ENCODE measurements at regions of chr6 and their contacts with region 1.

Region 1: DNA sequence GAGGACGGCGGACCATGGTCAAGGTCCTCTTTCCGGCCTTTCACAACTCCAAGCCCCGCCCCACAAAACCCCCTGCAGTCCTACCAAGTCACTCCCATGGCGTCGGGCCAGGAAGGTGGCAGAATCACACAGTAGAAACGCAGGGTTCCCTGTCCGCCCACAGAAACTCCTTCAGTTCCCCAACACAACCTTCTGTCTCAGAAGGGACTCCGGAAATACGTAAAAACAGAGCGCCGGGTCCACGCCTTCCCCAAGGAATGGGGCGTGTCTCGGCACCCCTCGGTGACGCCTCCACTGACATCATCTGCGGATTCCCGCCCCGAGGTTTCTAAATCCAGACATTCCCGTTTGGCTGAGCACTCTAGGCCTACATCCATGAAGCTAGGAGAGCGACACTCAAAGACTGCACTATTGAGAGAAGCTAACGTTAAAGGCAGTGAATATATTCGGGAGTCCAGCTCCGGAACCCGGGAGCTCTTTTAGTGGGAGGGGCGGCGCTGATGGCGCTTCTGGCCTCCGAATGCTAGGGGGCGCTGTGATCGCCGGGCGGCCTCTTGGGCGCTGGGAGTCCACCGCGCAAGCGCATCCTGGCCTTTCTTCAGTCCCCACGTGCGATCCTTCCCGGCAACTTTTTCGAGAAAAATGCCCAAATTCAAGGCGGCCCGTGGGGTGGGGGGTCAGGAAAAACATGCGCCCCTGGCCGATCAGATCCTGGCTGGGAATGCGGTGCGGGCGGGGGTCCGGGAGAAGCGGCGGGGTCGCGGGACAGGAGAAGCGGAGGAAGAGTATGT is at the starts of genes BYSL and MED20:
- DNase-seq: peak; percentile 71
- H3K4me3 ChIP-seq: peak within 1 kb of the TSS; percentile 98
- CTCF ChIP-seq: peak; percentile 94

Region 2: GRCh38 chr6:41846666-41847237 is 74.4 kb before region 1 on chr6:
- CTCF ChIA-PET with region 1: interaction called, 22 read pairs
- POLR2A ChIA-PET with region 1: no interaction called
- DNase-seq: peak; percentile 69
- H3K4me3 ChIP-seq: no peak overlapping the region
- CTCF ChIP-seq: peak; percentile 71

Region 3: GRCh38 chr6:41894366-41895299 is 26.5 kb before region 1 on chr6:
- CTCF ChIA-PET with region 1: interaction called, 17 read pairs
- POLR2A ChIA-PET with region 1: no interaction called
- DNase-seq: no peak
- H3K4me3 ChIP-seq: peak overlapping the region; percentile 79
- CTCF ChIP-seq: no peak

Region 4: GRCh38 chr6:41941280-41942066 is 20.4 kb after region 1 on chr6 and contains the start of gene CCND3:
- CTCF ChIA-PET with region 1: interaction called, 341 read pairs
- POLR2A ChIA-PET with region 1: interaction called, 6 read pairs
- DNase-seq: no peak
- H3K4me3 ChIP-seq: peak within 1 kb of the TSS; percentile 96
- CTCF ChIP-seq: no peak

Region 5: DNA sequence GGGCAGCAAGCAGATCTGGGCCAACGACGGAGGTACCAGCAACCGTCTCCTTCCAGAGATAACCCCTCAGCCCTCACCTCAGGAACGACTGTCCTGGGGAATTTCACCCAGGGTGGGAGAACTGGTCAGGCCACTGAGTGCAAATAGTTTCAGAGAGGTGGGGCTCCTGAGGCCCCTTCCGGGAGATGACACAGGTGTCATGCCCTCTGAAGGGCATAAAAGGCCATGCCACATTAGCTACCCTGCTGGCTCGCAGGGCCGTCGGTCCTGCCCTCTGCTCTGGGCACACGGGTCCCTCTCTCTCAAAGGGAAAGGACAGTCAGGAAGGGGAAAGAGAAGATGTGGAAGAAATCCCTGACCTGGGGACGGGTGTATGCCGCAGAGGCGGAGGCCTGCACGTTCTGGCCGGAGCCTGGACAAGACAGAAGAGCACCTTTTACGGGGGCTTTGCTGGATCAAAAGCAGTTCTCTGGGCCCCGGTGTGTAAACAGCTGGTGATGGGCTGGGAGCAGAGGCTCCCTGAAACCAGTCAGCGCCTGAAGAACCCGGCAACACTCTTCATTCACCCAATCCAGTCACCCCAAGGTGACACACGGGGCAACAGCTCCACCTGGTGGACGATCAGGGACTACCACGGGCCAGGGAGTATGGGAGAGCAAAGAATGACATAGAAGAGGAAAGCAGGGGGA is 122.8 kb after region 1 on chr6:
- CTCF ChIA-PET with region 1: interaction called, 46 read pairs
- POLR2A ChIA-PET with region 1: no interaction called
- DNase-seq: no peak
- H3K4me3 ChIP-seq: no peak overlapping the region; the same call in 1 of the 2 replicates
- CTCF ChIP-seq: peak; percentile 94